Activated T-helper 1 cell treated with anti-CD3 and anti-CD28 coated beads, Interleukin-12 subunit alpha, Interleukin-12 subunit beta, Interleukin-2, Interleukin-4 antibody, amounts not matched to agents 30 ng/mL and 10 ng/mL and 1 ng/mL, durations not matched to agents 14 hours and 24 hours and 36 hours (primary cell): ENCODE measurements at regions of chr6 and their contacts with region 1.

Region 1: DNA sequence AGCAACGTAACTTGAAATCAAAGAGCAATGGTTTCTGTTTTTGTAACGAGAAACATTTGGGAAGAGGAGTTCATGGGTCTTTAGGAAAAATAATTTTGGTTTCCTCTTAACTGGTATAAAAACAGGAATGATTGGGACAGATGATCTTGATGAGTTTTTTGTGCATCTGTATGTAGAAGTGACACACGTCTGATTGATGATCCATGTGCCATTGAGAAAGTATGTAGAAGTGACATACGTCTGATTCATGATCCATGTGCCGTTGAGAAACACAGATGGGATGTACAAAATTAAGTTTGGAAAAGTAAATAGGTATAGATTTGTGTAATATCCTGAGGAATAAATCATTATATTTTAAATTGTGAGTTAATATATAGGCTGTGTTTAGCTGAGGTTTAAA is 2.1 kb downstream of the KIAA1586 start:
- DNase-seq: no peak
- H3K4me3 Mint-ChIP-seq: peak overlapping the region; percentile 84
- H3K27ac Mint-ChIP-seq: no peak overlapping the region
- H3K4me1 Mint-ChIP-seq: peaks cover 35% of the 10 kb centered on the region
- H3K27me3 Mint-ChIP-seq: peaks cover 23% of the 10 kb centered on the region

Region 2: GRCh38 chr6:55153284-55153683 is 1895.3 kb before region 1 on chr6:
- intact Hi-C with region 1: no loop called
- DNase-seq: no peak
- H3K4me3 Mint-ChIP-seq: no peak overlapping the region
- H3K27ac Mint-ChIP-seq: no peak overlapping the region
- H3K4me1 Mint-ChIP-seq: no peaks in the 10 kb centered on the region
- H3K27me3 Mint-ChIP-seq: no peaks in the 10 kb centered on the region

Region 3: DNA sequence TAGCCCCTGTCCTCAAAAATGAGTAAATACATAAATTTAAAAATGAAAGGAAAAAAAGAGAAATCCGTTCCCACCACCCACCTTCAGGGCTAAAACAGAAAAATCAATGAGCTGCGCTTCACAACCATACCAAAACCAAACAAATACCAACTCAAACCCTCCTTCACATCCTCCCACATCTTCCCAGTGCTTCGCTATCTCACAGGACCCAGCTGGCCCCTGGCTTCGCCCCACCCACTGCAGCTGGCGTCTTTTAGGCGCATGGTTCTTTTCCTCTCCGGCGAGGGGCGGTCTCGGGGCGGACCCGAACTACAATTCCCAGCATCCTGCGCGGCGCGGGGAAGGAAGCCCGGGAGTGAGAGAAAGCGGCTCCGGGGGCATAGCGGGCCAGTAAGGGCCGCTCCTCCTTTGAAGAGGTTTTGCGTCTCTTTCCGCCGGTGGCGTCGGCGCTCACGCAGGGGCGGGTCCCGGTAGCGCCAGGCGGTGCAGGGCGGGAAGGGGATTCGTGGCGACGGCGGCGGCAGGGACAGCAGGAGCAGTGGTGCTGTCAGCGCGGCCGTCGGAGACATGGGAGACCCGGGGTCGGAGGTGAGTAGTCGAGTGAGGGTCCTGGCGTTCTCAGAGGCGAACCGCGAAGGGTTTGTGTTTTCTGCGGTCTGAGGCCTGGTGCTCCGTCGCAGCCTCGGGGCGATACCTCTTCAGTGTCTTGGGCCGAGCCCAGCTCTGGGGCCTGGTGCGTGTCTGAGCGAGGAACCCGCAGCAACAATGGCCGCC is 41.3 kb after region 1 on chr6 and contains the start of gene ZNF451:
- intact Hi-C with region 1: loop called (anchors 1 kb)
- DNase-seq: peak; percentile 95
- H3K4me3 Mint-ChIP-seq: peak within 1 kb of the TSS; percentile 88
- H3K27ac Mint-ChIP-seq: peak within 1 kb of the TSS; percentile 72
- H3K4me1 Mint-ChIP-seq: peaks cover 35% of the 10 kb centered on the region
- H3K27me3 Mint-ChIP-seq: no peaks in the 10 kb centered on the region
- total RNA-seq, gene ZNF451: 58.1 and 64.4 TPM in 2 replicates